ENCODE measurements at regions of chr10 and their contacts with region 1.

Region 1: GRCh38 chr10:19629567-19629966 is 186.7 kb upstream of the PLXDC2 start:
- DNase-seq: peak; percentile 83

Region 2: DNA sequence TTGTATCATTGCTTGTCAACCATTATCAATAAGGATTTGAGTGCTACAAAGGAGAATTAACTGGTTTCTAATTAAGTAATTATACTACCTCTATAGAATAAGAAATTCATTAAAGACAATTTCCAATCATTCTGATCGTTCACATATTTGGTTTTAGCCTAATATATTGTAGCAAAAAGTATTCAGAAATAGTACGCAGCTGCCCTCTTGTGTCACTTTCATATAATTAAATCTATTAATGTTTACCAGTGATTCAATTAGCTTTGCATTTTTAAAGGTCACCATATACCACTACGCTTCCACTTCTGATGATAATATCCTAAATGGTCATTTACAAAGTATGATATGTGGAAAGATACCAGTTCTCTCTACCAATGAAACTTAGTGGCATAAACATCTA is 1139.3 kb after region 1 on chr10:
- intact Hi-C with region 1: loop called (anchors 10 kb)
- DNase-seq: no peak

Measured in cardiac septum (tissue), 1 donor.